AG04449 (cell line): ENCODE measurements at regions of chr17 and their contacts with region 1.

Region 1: DNA sequence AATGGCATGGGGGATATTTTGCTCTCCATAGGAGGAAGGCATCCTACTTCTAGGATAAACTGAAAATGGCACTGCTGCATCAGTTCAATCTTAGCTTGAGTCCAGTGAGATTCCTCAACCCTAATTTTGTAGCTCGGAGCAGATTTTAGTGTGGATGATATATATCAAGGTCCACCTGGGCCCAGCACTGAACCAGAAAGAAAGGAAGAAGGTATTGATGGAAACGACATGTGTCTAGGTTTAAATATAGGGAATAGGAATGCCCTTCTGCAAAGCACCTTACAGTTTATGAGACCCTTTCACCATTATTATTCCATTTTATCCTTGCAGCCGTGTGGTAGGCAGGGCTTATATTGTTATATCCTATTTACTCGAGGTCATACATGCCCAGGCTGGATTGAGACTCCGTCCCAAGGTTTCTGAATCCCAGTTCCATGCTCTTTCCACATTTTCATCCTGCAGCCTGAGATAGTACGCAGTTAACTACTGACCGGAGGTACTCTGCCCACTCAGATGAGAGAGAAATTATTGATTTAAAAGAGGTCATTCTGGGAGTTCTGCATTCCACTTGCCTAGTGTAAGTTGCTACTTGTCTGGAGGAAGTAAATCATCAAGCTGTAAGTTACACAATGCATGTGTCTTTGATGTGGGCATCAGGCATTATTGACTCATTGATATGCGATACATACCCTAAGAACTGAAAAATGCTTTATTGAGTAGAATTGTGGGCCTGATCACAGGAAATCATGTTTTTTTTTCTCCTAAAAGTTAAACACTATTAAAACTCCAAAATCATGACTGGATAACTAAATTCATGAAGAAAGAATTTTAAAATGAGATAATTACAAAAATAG is 10.1 kb downstream of the KRT39 start:
- DNase-seq: peak; percentile 100
- H3K4me3 ChIP-seq: no peak overlapping the region
- CTCF ChIP-seq: no peak

Region 2: GRCh38 chr17:40909351-40909750 is 47.3 kb before region 1 on chr17:
- CTCF ChIA-PET with region 1: no interaction called
- POLR2A ChIA-PET with region 1: interaction called, 15 read pairs
- DNase-seq: peak; percentile 93
- H3K4me3 ChIP-seq: no peak overlapping the region
- CTCF ChIP-seq: peak; percentile 64

Region 3: DNA sequence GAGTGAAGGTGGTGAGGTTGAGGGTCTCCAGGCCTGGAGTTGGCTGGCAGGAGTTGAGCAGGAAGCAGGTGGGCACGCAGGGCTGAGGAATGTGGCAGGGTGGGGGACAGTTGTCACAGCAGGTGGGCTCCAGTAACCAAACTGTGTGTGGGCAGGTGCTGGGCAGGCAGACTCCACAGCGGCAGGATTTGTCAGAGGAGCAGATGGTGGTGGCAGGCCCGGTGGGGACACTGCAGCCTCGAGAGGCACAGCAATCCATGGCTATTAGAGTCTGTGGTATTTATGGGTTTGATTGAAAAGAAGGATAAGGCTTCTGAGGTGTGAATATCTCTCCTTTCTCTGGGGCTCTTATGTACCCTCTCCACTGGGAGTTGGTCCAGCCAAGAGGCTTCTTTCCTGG is 37.2 kb after region 1 on chr17 and contains the start of gene KRTAP3-3:
- CTCF ChIA-PET with region 1: no interaction called
- POLR2A ChIA-PET with region 1: no interaction called
- DNase-seq: no peak
- H3K4me3 ChIP-seq: no peak within 1 kb of the TSS
- CTCF ChIP-seq: no peak